A549 (cell line): ENCODE measurements at regions of chr1 and their contacts with region 1.

Region 1: DNA sequence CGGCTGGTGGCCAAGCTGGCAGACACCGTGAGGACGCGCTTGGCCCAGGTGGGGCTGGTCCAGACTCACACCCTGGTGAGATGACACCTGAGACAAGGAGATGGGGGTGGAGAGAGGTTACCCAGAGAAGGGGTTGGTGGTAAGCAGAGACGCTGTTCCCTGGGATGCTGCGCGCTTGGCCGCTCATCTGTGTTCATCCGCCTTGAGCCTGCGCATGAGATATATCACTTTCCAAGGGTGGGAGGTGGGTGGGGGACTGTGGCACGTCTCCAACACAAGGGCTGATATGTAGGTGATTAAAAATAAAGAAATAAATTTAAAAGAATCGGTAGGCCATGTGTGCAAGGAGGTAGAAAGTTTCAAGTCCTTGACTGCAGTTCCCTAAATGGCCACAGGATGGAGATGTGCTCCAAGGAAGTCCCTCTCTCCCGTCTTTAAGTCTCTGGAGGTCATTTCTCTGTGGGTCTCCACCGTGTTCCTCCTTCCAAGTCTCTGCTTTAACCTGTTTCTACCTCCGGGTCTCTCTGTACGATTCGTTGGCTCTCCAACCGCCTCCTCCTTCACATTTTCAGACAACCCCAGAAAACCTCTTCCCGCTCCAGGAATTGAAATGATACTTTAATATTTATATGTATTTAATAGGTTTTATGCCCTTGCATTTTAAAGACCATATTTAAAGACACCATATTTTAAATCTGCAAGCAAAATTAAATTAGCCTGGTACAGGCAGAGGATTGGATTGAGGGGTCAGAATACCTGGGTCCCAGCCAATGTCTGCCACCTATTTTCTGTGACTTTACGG is 4.5 kb downstream of the TTC24 start:
- DNase-seq: peak; percentile 85 to 88
- ATAC-seq: peak; percentile 67 to 80
- H3K4me3 ChIP-seq: no peak overlapping the region
- H3K27ac ChIP-seq: peak overlapping the region in 1 of 2 experiments; percentile 60; a peak in 3 of 6 replicates
- H3K4me1 ChIP-seq: 0 out of 3 replicates have a peak, but pooled peaks cover 4% of the 10 kb centered on the region
- CTCF ChIP-seq: peak; percentile 82
- EP300 ChIP-seq: no peak
- POLR2A ChIP-seq: no peak
- RAD21 ChIP-seq: peak; percentile 78 to 85

Region 2: DNA sequence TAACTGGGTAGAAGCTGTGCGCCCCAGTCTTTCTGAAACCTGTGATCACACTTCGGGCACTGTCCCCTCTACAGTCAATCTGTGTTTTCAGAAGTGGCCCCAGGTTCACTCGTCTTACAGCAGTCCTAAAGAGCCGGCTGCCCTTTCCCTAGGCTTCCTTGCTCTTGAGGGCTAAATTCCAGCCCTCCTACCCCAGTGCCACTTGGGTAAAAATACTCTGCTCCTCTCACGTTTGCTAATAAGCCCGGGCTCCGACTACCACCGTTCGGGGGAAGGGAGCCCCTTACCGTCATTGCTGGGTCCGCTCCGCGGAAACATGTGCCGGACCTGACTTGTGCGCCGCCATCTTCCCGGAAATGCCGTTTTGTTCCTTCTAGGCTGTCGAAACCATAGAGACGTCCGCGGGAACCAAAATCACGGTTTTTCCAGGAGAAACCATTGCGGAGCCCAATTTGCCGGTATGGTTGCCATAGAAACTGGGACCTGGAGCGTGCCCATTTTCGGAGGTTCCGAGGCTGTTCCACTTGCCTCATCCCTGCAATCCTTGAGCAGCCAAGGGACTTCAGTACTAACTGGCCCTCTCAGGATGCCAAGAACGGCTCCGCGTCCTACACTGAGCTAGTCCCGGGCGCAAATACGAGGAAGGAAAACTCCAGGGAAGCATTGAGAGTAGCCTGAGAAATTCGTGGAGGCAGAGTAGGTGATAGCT is 17.3 kb after region 1 on chr1 and contains the start of gene GPATCH4:
- CTCF ChIA-PET with region 1: interaction called, 23 read pairs
- POLR2A ChIA-PET with region 1: no interaction called
- DNase-seq: peak; percentile 89 to 92
- ATAC-seq: peak; percentile 86 to 87
- H3K4me3 ChIP-seq: peak within 1 kb of the TSS; percentile 77
- H3K27ac ChIP-seq: peak within 1 kb of the TSS; percentile 86 to 94
- H3K4me1 ChIP-seq: peaks cover 19% of the 10 kb centered on the region
- CTCF ChIP-seq: no peak
- EP300 ChIP-seq: no peak
- POLR2A ChIP-seq: peak; percentile 87
- RAD21 ChIP-seq: no peak
- polyA plus RNA-seq, gene GPATCH4: 68.1 and 76.1 TPM in 2 replicates

Region 3: GRCh38 chr1:156740679-156741612 is 156.9 kb after region 1 on chr1 and contains the start of gene MRPL24:
- CTCF ChIA-PET with region 1: no interaction called
- POLR2A ChIA-PET with region 1: no interaction called
- DNase-seq: peak; percentile 97 to 100
- ATAC-seq: peak; percentile 92 to 93
- H3K4me3 ChIP-seq: peak within 1 kb of the TSS; percentile 66
- H3K27ac ChIP-seq: peak within 1 kb of the TSS; percentile 88 to 94
- H3K4me1 ChIP-seq: peaks cover 30% of the 10 kb centered on the region
- CTCF ChIP-seq: no peak
- EP300 ChIP-seq: no peak
- POLR2A ChIP-seq: peak; percentile 57
- RAD21 ChIP-seq: no peak
- polyA plus RNA-seq, gene MRPL24: 170 and 246 TPM in 2 replicates

Region 4: DNA sequence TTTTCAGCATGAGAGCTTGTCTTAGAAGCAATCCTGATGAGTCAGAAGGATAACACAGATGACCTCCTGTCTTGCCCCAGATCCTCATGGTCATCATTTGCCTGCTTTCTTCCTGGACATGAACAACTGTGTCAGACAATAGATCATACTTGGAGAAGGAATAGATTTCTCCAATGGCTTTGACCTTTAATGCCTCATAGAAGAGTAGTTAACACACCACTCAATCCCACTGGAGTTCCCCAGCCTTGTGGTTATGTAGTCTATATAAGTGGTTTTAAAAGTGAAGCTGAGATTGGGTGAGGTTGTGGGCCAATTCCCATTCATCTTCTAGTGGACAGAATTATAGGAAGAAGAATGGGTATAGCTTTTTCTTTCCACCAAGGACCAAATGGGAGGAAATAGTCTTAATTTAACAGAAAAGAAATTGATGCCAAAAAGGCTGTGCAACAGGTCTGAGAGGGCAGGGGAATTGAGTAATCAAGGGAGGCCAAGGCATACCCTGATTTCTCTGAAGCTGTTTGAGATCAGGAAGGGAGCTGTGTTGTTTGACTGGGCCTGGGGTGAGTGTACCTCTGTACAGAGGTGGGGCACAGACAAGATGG is 197.7 kb after region 1 on chr1:
- CTCF ChIA-PET with region 1: no interaction called
- POLR2A ChIA-PET with region 1: no interaction called
- DNase-seq: peak in 1 of 2 experiments; percentile 14
- ATAC-seq: no peak
- H3K4me3 ChIP-seq: no peak overlapping the region
- H3K27ac ChIP-seq: no peak overlapping the region
- H3K4me1 ChIP-seq: peaks cover 8% of the 10 kb centered on the region; the same call in 2 of the 3 replicates
- CTCF ChIP-seq: no peak
- EP300 ChIP-seq: no peak
- POLR2A ChIP-seq: no peak
- RAD21 ChIP-seq: no peak